ENCODE measurements at regions of chr5 and their contacts with region 1.

Region 1: GRCh38 chr5:74934949-74935751 is 69.0 kb upstream of the FAM169A start:
- DNase-seq: peak in 4 of 5 donors; percentile 25 to 43 (median 30)
- H3K4me3 ChIP-seq: peak overlapping the region; percentile 2 to 8
- H3K4me3 Mint-ChIP-seq: peak overlapping the region; percentile 65 to 82 (median 74)
- H3K27ac ChIP-seq: peak overlapping the region; percentile 17
- H3K27ac Mint-ChIP-seq: peak overlapping the region; percentile 30 to 92 (median 64)
- H3K4me1 ChIP-seq: peaks cover 19% of the 10 kb centered on the region
- H3K4me1 Mint-ChIP-seq: peaks cover 16 to 30% (median 27%) of the 10 kb centered on the region in 4 donors
- H3K27me3 ChIP-seq: no peaks in the 10 kb centered on the region
- H3K27me3 Mint-ChIP-seq: no peaks in the 10 kb centered on the region

Region 2: DNA sequence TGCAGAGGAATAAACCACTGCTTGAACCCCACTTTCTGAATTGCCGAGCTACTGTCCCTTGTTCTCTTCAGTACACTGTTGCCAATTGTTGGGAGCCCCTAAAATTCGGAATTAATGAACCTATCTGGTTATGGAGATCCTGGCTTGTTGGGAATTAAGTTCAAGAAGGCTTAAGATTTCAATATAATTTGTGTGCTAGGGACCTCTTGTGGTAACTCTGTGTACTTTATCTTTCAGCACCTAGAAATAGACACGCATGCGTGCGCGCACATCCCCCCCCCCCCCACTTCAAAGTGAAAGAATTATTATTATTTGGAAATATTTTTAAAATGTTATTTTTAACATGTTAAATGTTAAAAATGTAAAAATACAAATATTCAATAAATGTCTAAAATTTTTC is 15.7 kb before region 1 on chr5:
- CTCF ChIA-PET with region 1: interaction called, 17 read pairs
- POLR2A ChIA-PET with region 1: no interaction called
- intact Hi-C with region 1: no loop called
- DNase-seq: peak in 4 of 5 donors; percentile 19 to 48 (median 23)
- H3K4me3 ChIP-seq: no peak overlapping the region
- H3K4me3 Mint-ChIP-seq: peak overlapping the region in 1 of 8 donors; percentile 15
- H3K27ac ChIP-seq: no peak overlapping the region
- H3K27ac Mint-ChIP-seq: no peak overlapping the region
- H3K4me1 ChIP-seq: no peaks in the 10 kb centered on the region
- H3K4me1 Mint-ChIP-seq: no peaks in the 10 kb centered on the region
- H3K27me3 ChIP-seq: no peaks in the 10 kb centered on the region
- H3K27me3 Mint-ChIP-seq: peaks cover 0 to 5% of the 10 kb centered on the region in 2 donors

Region 3: GRCh38 chr5:75028090-75028489 is 92.9 kb after region 1 on chr5:
- CTCF ChIA-PET with region 1: interaction called, 4 read pairs
- POLR2A ChIA-PET with region 1: no interaction called
- intact Hi-C with region 1: loop called (anchors 5 kb)
- DNase-seq: peak in 3 of 5 donors; percentile 9 to 39 (median 24)
- H3K4me3 ChIP-seq: no peak overlapping the region
- H3K4me3 Mint-ChIP-seq: peak overlapping the region in 2 of 8 donors; percentile 16 to 17
- H3K27ac ChIP-seq: no peak overlapping the region
- H3K27ac Mint-ChIP-seq: peak overlapping the region in 4 of 7 donors; percentile 49 to 63 (median 60)
- H3K4me1 ChIP-seq: peaks cover 28% of the 10 kb centered on the region
- H3K4me1 Mint-ChIP-seq: peaks cover 25 to 53% (median 46%) of the 10 kb centered on the region in 4 donors
- H3K27me3 ChIP-seq: no peaks in the 10 kb centered on the region
- H3K27me3 Mint-ChIP-seq: peaks cover 0 to 2% of the 10 kb centered on the region in 2 donors

Measured in CD4-positive, alpha-beta memory T cell (primary cell).